ENCODE measurements at regions of chr3 and their contacts with region 1.

Region 1: DNA sequence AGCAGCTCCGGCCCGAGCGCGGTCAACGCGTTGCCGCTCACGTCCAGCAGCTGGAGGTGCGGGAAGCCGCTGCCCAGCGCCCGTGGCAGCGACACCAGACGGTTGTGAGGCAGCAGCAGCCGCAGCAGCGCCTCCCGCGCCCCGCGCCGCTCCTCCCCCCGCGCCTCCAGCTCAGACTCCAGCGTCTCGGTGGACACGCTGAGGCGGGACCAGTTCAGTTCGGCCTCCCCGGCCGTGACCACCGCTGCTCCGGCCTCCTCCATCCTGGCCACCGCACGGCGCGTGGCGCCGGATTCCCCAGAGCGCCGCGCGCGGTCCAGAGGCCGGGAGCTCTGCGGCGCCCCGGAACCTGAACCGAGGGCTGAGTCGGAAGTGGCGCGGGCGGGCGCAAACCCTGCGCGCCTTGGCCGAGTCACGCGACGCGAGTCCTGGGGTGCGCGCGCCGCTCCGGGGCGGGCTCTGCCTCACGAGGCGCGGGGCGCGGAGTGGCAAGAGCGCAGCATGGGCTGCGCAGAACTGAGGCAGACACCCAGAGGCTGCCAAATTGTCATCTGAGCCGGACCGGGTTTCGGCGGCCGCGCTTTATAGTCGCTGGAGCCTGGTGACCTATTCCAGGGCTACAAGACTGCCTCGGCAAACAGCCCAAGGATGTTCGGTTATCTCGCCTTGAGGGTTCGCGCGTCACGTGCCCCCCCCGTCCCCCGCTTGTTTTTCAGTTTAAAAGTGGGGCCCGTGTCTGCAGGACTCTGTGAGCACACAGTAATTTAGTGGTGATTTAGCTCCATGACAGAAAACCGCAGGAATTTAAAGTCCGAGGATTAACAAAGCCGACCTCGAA is at the start of gene LRRC58:
- DNase-seq: peak; percentile 66
- ATAC-seq: peak; percentile 73
- H3K4me3 Mint-ChIP-seq: peak within 1 kb of the TSS; percentile 72
- H3K27ac Mint-ChIP-seq: peak within 1 kb of the TSS; percentile 58
- H3K4me1 Mint-ChIP-seq: peaks cover 25% of the 10 kb centered on the region
- H3K27me3 Mint-ChIP-seq: peaks cover 14% of the 10 kb centered on the region
- CTCF ChIP-seq: no peak
- total RNA-seq, gene LRRC58: 15.1 to 15.8 TPM (median 15.8 TPM) in 3 replicates

Region 2: GRCh38 chr3:120245386-120245785 is 103.8 kb before region 1 on chr3:
- CTCF ChIA-PET with region 1: interaction called, 11 read pairs
- POLR2A ChIA-PET with region 1: interaction called, 3 read pairs
- DNase-seq: no peak
- ATAC-seq: no peak
- H3K4me3 Mint-ChIP-seq: no peak overlapping the region
- H3K27ac Mint-ChIP-seq: no peak overlapping the region
- H3K4me1 Mint-ChIP-seq: no peaks in the 10 kb centered on the region
- H3K27me3 Mint-ChIP-seq: peaks cover 4% of the 10 kb centered on the region; the same call in 1 of the 2 replicates
- CTCF ChIP-seq: no peak